Psoas muscle (tissue), 8 donors: ENCODE measurements at regions of chr18 and their contacts with region 1.

Region 1: DNA sequence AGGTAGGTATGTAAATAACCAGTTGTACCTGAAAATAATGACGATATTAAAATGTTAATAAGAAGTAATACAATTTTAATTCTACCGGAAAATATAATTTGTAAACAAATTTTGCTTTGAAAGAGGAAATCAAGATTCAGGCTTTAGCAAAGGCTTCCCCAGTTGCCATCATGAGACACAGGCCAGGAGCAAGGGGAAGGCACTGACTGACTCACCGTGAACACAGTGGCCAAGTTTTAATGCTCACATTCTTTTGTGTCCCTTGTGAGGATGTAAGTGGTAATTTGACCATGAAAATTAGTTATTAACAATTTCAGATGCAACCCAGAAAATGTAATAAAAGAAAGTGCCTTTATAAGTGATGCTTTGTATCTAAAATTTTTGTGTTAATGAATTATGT is 164.1 kb downstream of the GREB1L start:
- DNase-seq: no peak
- ATAC-seq: no peak
- H3K4me3 ChIP-seq: no peak overlapping the region
- H3K27ac ChIP-seq: no peak overlapping the region
- H3K4me1 ChIP-seq: no peaks in the 10 kb centered on the region
- H3K27me3 ChIP-seq: no peaks in the 10 kb centered on the region
- CTCF ChIP-seq: no peak

Region 2: GRCh38 chr18:21389283-21389682 is 16.8 kb before region 1 on chr18:
- intact Hi-C with region 1: loop called in 1 of 2 experiments (anchors 2 kb)
- DNase-seq: no peak
- ATAC-seq: no peak
- H3K4me3 ChIP-seq: no peak overlapping the region
- H3K27ac ChIP-seq: no peak overlapping the region
- H3K4me1 ChIP-seq: no peaks in the 10 kb centered on the region
- H3K27me3 ChIP-seq: no peaks in the 10 kb centered on the region
- CTCF ChIP-seq: no peak

Region 3: GRCh38 chr18:21444465-21445023 is 38.4 kb after region 1 on chr18:
- intact Hi-C with region 1: loop called in 1 of 2 experiments (anchors 5 kb)
- DNase-seq: no peak
- ATAC-seq: peak; percentile 27 to 80 (median 70)
- H3K4me3 ChIP-seq: peak overlapping the region; percentile 37
- H3K27ac ChIP-seq: no peak overlapping the region
- H3K4me1 ChIP-seq: peaks cover 61% of the 10 kb centered on the region
- H3K27me3 ChIP-seq: no peaks in the 10 kb centered on the region
- CTCF ChIP-seq: peak; percentile 62

Region 4: GRCh38 chr18:21538230-21538629 is 132.1 kb after region 1 on chr18:
- intact Hi-C with region 1: no loop called
- DNase-seq: no peak
- ATAC-seq: no peak
- H3K4me3 ChIP-seq: no peak overlapping the region
- H3K27ac ChIP-seq: no peak overlapping the region
- H3K4me1 ChIP-seq: no peaks in the 10 kb centered on the region
- H3K27me3 ChIP-seq: no peaks in the 10 kb centered on the region
- CTCF ChIP-seq: no peak